ENCODE measurements at regions of chr4 and their contacts with region 1.

Region 1: DNA sequence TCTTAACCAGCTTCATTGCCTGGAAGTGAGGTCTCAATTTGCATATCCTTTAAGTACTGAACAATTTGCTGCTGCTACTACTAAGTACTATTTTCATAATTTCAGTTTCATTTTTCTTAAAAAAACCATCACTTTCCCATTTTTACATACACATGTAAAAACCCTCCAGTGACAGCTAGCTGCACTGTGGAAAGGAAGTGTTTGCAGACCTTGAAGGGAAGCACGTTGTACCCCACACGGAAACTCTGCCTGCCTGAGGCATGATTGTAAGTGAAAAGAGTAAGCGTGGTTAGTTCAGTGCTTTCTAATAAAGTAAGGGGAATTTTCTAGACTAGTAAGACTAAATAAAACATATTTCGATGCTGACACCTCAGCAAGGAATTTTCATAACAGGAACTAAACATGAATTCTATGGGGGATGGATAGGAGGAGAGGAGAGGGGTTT is 103.6 kb downstream of the RAPGEF2 start:
- DNase-seq: peak; percentile 31
- H3K4me3 Mint-ChIP-seq: peak overlapping the region; percentile 41
- H3K27ac Mint-ChIP-seq: peak overlapping the region; percentile 83
- H3K4me1 Mint-ChIP-seq: peaks cover 54% of the 10 kb centered on the region
- H3K27me3 Mint-ChIP-seq: no peaks in the 10 kb centered on the region

Region 2: DNA sequence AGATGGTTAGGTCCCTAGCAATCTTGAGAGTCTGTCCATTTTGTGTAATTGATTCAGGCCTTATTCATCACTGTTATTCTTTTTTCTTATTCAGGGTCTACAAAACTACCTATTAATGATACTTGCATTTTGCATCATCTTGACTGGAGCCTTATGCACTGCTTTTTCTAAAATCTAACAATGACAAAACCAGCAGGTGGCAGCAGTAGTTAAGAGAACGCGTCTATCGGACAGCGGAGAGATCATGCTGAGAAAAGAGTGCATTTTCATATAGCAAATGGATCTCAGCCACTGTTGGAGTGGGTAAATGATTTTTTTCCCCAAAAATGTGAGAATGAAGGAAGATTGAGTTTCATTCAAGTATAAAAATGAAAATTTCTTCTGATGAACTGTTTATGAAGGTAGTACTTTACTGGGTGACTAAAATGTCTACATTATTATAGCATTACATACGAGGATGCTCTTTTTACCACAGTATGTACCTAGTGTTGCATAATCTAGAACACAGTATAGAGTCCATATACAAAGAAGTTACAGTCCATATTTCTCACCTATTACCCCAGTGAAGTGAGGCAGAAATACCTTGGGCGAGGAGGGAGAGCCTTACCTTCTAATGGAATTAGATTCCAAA is 953.0 kb before region 1 on chr4:
- intact Hi-C with region 1: loop called (anchors 2 kb)
- DNase-seq: peak; percentile 26
- H3K4me3 Mint-ChIP-seq: no peak overlapping the region
- H3K27ac Mint-ChIP-seq: no peak overlapping the region
- H3K4me1 Mint-ChIP-seq: peaks cover 10% of the 10 kb centered on the region
- H3K27me3 Mint-ChIP-seq: peaks cover 7% of the 10 kb centered on the region

Region 3: GRCh38 chr4:158722917-158723793 is 483.3 kb before region 1 on chr4 and contains the start of gene PPID:
- intact Hi-C with region 1: loop called (anchors 1 kb)
- DNase-seq: peak; percentile 80
- H3K4me3 Mint-ChIP-seq: peak within 1 kb of the TSS; percentile 95
- H3K27ac Mint-ChIP-seq: peak within 1 kb of the TSS; percentile 100
- H3K4me1 Mint-ChIP-seq: peaks cover 59% of the 10 kb centered on the region
- H3K27me3 Mint-ChIP-seq: peaks cover 5% of the 10 kb centered on the region
- total RNA-seq, gene PPID: 52.8 and 55.4 TPM in 2 replicates

Region 4: GRCh38 chr4:158768555-158769174 is 437.8 kb before region 1 on chr4 and contains the start of gene FNIP2:
- intact Hi-C with region 1: loop called (anchors 2 kb)
- DNase-seq: peak; percentile 76
- H3K4me3 Mint-ChIP-seq: peak within 1 kb of the TSS; percentile 100
- H3K27ac Mint-ChIP-seq: peak within 1 kb of the TSS; percentile 98
- H3K4me1 Mint-ChIP-seq: peaks cover 54% of the 10 kb centered on the region
- H3K27me3 Mint-ChIP-seq: peaks cover 2% of the 10 kb centered on the region
- total RNA-seq, gene FNIP2: 18.8 and 20.4 TPM in 2 replicates

Region 5: GRCh38 chr4:158856852-158857251 is 349.6 kb before region 1 on chr4:
- intact Hi-C with region 1: loop called (anchors 1 kb)
- DNase-seq: no peak
- H3K4me3 Mint-ChIP-seq: no peak overlapping the region
- H3K27ac Mint-ChIP-seq: no peak overlapping the region
- H3K4me1 Mint-ChIP-seq: peaks cover 12% of the 10 kb centered on the region
- H3K27me3 Mint-ChIP-seq: no peaks in the 10 kb centered on the region

Region 6: DNA sequence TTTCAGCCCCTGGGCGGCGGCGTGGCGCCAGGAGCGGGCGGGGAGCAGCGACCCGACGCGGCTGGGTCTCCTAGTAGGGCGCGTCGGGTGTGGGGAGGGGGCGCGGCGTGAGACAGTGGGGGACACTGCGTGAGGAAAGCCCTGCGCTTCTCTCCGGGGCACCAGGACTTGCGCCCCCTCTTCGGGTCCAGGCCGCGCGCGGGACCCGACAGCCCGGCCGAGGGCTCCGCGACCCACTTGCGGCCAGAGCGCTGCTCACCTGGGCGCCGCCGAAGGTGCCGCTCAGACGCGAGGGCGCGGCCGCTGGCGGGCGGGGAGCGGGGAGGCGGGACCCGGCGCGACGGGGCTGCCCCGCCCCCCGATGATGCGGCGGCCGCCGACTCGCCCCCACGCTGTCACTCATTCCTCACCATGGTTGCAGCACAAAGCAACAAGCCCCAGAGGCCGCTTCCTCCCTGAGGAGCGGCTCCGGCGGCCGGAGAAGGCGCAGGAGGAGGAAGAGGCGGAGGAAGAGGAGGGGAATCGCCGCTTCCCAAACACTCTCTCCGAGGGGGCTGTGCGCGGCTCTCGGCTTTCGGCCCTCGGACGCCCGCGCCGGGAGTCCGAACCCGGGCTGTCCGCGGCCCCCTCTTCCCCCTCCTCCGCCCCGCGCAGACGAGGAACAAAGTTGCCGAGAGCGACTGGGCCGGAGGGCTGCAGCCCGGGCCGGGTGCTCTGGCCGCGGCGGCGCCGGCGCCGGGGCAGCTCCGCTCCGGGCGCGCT is 103.6 kb before region 1 on chr4 and contains the start of gene RAPGEF2:
- intact Hi-C with region 1: loop called (anchors 1 kb)
- DNase-seq: peak; percentile 86
- H3K4me3 Mint-ChIP-seq: peak within 1 kb of the TSS; percentile 85
- H3K27ac Mint-ChIP-seq: peak within 1 kb of the TSS; percentile 93
- H3K4me1 Mint-ChIP-seq: peaks cover 61% of the 10 kb centered on the region
- H3K27me3 Mint-ChIP-seq: peaks cover 7% of the 10 kb centered on the region
- total RNA-seq, gene RAPGEF2: 27.5 and 28.3 TPM in 2 replicates

Region 7: DNA sequence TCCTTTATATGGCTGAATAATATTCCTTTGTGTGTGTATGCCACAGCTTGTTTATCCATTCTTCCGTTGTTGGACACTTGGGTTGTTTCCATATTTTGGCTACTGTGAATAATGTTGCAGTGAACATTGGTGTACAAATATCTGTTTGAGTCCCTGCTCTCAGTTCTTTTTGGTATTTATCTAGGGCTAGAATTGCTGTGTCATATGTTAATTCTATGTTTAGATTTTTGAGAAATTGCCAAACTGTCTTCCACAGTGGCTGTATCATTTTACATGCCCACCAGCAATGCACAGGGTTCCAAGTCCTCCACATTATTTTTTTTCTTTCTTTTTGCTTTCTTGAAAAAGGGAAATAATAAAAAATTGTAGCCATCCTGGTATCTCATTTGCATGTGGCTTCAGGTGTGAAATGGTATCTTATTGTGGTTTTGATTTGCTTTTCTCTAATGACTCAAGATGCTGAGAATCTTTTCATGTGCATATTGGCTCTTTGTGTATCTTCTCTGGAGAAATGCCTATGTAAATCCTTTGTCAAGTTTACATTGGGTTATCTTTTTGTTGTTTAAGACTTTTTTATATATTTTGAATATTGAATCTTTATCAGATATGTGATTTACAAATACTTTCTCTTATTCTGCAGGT is 26.1 kb after region 1 on chr4:
- intact Hi-C with region 1: loop called (anchors 1 kb)
- DNase-seq: no peak
- H3K4me3 Mint-ChIP-seq: no peak overlapping the region
- H3K27ac Mint-ChIP-seq: no peak overlapping the region
- H3K4me1 Mint-ChIP-seq: peaks cover 14% of the 10 kb centered on the region
- H3K27me3 Mint-ChIP-seq: no peaks in the 10 kb centered on the region

Region 8: DNA sequence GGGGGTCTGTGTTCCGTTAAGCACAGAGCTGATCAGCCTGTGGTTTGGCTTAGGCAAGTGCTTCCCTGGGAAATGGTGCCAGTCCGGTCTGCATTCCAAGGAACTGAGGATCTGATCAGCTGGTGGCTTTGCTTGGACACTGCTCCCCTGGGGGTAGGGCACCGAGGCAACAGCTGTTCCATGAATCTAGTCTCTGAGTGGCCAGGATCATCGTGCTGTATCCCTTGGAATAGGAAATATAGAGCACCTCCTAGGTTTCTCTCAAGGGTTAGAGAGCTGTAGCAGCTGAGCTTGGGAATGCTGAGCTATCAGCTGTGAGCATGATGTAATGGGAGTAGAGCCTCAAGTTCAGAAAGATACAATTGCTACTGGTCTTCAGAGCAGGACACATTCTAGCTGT is 760.3 kb after region 1 on chr4:
- intact Hi-C with region 1: no loop called
- DNase-seq: no peak
- H3K4me3 Mint-ChIP-seq: no peak overlapping the region
- H3K27ac Mint-ChIP-seq: no peak overlapping the region
- H3K4me1 Mint-ChIP-seq: no peaks in the 10 kb centered on the region
- H3K27me3 Mint-ChIP-seq: peaks cover 2% of the 10 kb centered on the region